CD8-positive, alpha-beta T cell (primary cell): ENCODE measurements at regions of chr1 and their contacts with region 1.

Region 1: GRCh38 chr1:19311959-19312781 is at the starts of genes AKR7A2 and SLC66A1:
- DNase-seq: peak; percentile 75 to 94 (median 88)
- ATAC-seq: peak; percentile 98
- H3K4me3 ChIP-seq: peak within 1 kb of the TSS; percentile 83 to 92
- H3K4me3 Mint-ChIP-seq: peak within 1 kb of the TSS; percentile 89
- H3K27ac ChIP-seq: peak within 1 kb of the TSS; percentile 54 to 64
- H3K27ac Mint-ChIP-seq: peak within 1 kb of the TSS; percentile 74
- H3K4me1 ChIP-seq: peaks cover 21% of the 10 kb centered on the region
- H3K4me1 Mint-ChIP-seq: peaks cover 42% of the 10 kb centered on the region
- H3K27me3 ChIP-seq: no peaks in the 10 kb centered on the region
- H3K27me3 Mint-ChIP-seq: no peaks in the 10 kb centered on the region
- CTCF ChIP-seq: no peak
- total RNA-seq, gene AKR7A2: 7.9 to 8.1 TPM
- total RNA-seq, gene SLC66A1: 1.3 to 2.1 TPM

Region 2: DNA sequence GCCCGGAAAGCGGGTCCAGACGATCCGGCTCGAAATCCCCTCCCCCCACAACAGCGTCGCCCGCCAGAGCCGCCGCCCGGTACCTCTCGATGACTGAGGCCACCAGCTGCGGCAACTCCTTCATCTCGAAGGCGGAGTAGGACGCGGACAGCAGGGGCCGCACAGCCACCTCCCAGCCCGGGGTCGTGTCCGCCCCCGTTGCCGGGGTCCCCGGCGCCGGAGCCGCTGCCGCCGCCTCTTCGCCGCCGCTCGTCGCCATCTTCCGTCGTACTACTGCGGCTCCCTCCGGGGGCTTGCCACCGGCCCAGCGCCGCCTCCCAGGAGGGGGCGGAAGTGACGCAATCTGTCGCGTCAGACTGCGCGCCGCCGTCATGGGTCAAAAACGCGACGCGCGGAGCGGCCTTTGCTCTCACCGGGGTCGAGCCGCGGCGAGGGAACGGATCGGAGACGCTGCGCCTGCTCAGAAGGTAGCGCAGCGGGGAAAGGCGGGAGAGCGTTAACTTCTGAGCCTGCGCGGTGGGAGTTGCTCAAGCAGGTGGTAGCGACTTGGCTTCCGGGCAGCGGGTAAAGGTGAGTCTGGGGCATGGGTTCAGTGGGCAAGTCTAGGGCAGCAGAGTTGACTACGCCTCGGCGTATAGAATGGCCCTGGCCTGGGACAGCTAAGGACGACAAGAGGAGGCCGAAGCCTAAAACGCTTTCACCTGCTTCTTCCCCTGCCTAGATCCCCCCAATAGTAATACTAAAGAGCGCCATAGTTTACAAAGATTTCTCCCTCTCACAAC is 102.0 kb before region 1 on chr1 and contains the start of gene UBR4:
- CTCF ChIA-PET with region 1: no interaction called
- POLR2A ChIA-PET with region 1: no interaction called
- intact Hi-C with region 1: loop called (anchors 1 to 10 kb)
- DNase-seq: peak; percentile 91 to 99 (median 97)
- ATAC-seq: peak; percentile 93
- H3K4me3 ChIP-seq: peak within 1 kb of the TSS; percentile 73 to 96
- H3K4me3 Mint-ChIP-seq: peak within 1 kb of the TSS; percentile 96
- H3K27ac ChIP-seq: peak within 1 kb of the TSS; percentile 86 to 96
- H3K27ac Mint-ChIP-seq: peak within 1 kb of the TSS; percentile 99
- H3K4me1 ChIP-seq: peaks cover 48% of the 10 kb centered on the region
- H3K4me1 Mint-ChIP-seq: peaks cover 76% of the 10 kb centered on the region
- H3K27me3 ChIP-seq: no peaks in the 10 kb centered on the region
- H3K27me3 Mint-ChIP-seq: no peaks in the 10 kb centered on the region
- CTCF ChIP-seq: no peak
- total RNA-seq, gene UBR4: 146 to 148 TPM

Region 3: GRCh38 chr1:19251305-19252196 is 60.6 kb before region 1 on chr1 and contains the starts of genes EMC1 and MRTO4:
- CTCF ChIA-PET with region 1: no interaction called
- POLR2A ChIA-PET with region 1: interaction called, 4 read pairs
- intact Hi-C with region 1: loop called in 1 of 2 experiments (anchors 1 kb)
- DNase-seq: peak; percentile 83 to 94 (median 87)
- ATAC-seq: peak; percentile 93
- H3K4me3 ChIP-seq: peak within 1 kb of the TSS; percentile 66 to 88
- H3K4me3 Mint-ChIP-seq: peak within 1 kb of the TSS; percentile 95
- H3K27ac ChIP-seq: peak within 1 kb of the TSS; percentile 83 to 98
- H3K27ac Mint-ChIP-seq: peak within 1 kb of the TSS; percentile 94
- H3K4me1 ChIP-seq: peaks cover 34% of the 10 kb centered on the region
- H3K4me1 Mint-ChIP-seq: peaks cover 38% of the 10 kb centered on the region
- H3K27me3 ChIP-seq: no peaks in the 10 kb centered on the region
- H3K27me3 Mint-ChIP-seq: no peaks in the 10 kb centered on the region
- CTCF ChIP-seq: no peak
- total RNA-seq, gene EMC1: 28.2 to 33.5 TPM
- total RNA-seq, gene MRTO4: 18.9 to 19.5 TPM

Region 4: DNA sequence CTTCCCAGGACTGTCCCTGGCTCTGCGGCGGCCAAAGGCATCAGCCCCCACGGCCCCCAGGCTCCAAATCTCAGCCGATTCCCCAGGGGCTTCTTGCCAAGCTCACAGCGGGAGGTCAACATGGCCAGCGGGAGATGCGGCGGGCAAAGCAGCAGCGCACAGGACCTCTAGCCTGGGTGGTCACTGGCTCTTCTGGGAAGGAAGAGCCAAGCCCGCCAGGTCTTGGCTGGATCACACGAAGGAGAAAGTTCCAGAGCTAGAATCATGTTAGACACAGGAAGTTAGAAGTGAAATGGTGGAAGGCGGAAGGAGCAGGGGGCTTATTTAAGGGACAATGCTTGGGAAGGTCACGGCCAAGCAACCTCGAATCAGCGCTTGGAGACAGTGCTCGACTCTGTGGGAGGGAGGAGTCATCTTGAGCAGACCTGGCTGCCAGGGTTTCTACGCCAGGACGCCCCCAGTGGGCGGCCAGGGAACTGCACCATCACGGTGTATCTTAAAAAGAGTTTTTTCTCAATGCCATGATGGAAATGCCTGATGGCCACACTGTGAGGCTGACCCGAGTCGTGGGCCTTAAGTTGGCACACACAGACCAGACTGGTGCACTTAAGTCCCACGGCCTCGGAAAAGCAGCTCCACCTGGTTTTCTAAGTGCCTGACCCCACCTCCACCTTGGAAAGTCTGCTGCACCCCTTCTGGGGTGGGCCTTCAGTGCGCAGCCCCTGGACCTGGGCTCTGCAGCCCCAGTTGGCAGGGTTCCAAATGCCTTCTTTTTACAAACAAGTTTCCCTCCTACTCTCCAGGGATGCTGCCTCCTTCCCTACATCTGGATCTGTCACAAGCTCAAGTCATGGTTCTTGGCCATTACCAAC is 29.3 kb after region 1 on chr1:
- CTCF ChIA-PET with region 1: interaction called, 3 read pairs
- POLR2A ChIA-PET with region 1: no interaction called
- intact Hi-C with region 1: loop called in 1 of 2 experiments (anchors 1 kb)
- DNase-seq: peak; percentile 55 to 79 (median 72)
- ATAC-seq: peak; percentile 94
- H3K4me3 ChIP-seq: no peak overlapping the region
- H3K4me3 Mint-ChIP-seq: no peak overlapping the region
- H3K27ac ChIP-seq: no peak overlapping the region
- H3K27ac Mint-ChIP-seq: no peak overlapping the region
- H3K4me1 ChIP-seq: no peaks in the 10 kb centered on the region
- H3K4me1 Mint-ChIP-seq: peaks cover 6% of the 10 kb centered on the region
- H3K27me3 ChIP-seq: no peaks in the 10 kb centered on the region
- H3K27me3 Mint-ChIP-seq: no peaks in the 10 kb centered on the region
- CTCF ChIP-seq: peak; percentile 88

Region 5: GRCh38 chr1:19390901-19391595 is 78.9 kb after region 1 on chr1:
- CTCF ChIA-PET with region 1: no interaction called
- POLR2A ChIA-PET with region 1: no interaction called
- intact Hi-C with region 1: loop called in 1 of 2 experiments (anchors 2 kb)
- DNase-seq: peak; percentile 46 to 87 (median 68)
- ATAC-seq: peak; percentile 70
- H3K4me3 ChIP-seq: peak overlapping the region; percentile 34 to 38
- H3K4me3 Mint-ChIP-seq: peak overlapping the region; percentile 85
- H3K27ac ChIP-seq: peak overlapping the region; percentile 50 to 66
- H3K27ac Mint-ChIP-seq: peak overlapping the region; percentile 90
- H3K4me1 ChIP-seq: peaks cover 54% of the 10 kb centered on the region
- H3K4me1 Mint-ChIP-seq: peaks cover 77% of the 10 kb centered on the region
- H3K27me3 ChIP-seq: no peaks in the 10 kb centered on the region
- H3K27me3 Mint-ChIP-seq: no peaks in the 10 kb centered on the region
- CTCF ChIP-seq: peak; percentile 88

Region 6: DNA sequence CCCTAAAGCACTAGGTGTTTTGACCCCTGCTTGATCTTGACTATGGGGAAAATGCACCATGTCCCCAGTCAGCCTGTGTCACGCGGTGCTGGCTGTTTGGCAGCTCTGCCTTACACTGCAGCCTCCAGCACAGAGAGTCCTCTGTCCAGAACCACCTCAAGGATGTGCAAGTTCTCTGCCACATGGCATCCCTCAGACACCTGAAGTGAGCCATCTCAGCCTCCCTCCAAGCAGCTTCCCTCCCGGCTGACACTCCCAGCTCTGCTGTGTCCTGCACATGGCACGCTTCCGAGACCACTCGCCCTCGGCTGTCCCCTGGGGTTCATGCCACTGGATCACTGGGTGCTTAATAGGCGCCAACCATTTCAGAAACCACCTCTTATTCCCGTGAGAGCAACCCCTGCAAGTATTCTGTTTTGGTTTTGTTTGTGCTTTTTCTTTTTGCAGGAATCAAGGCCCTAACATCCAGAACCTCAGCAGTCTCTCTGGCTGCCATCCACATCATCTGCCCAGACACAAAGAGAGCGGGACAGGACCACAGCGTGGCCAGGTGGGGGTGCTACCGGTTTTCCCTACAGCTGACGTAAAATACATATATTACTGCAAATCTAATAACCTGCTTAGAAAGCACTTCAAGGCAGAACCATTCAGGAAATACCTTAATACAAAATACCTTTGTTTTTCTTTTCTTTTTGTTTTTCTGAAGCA is 127.4 kb after region 1 on chr1:
- CTCF ChIA-PET with region 1: no interaction called
- POLR2A ChIA-PET with region 1: no interaction called
- intact Hi-C with region 1: no loop called
- DNase-seq: peak; percentile 14 to 69 (median 58)
- ATAC-seq: peak; percentile 82
- H3K4me3 ChIP-seq: no peak overlapping the region
- H3K4me3 Mint-ChIP-seq: peak overlapping the region; percentile 22
- H3K27ac ChIP-seq: peak overlapping the region in 1 of 2 experiments; percentile 37
- H3K27ac Mint-ChIP-seq: peak overlapping the region; percentile 85
- H3K4me1 ChIP-seq: peaks cover 80% of the 10 kb centered on the region
- H3K4me1 Mint-ChIP-seq: peaks cover 90% of the 10 kb centered on the region
- H3K27me3 ChIP-seq: no peaks in the 10 kb centered on the region
- H3K27me3 Mint-ChIP-seq: no peaks in the 10 kb centered on the region
- CTCF ChIP-seq: peak; percentile 47

Region 7: GRCh38 chr1:19643602-19644394 is 331.6 kb after region 1 on chr1 and contains the start of gene NBL1:
- CTCF ChIA-PET with region 1: no interaction called
- POLR2A ChIA-PET with region 1: no interaction called
- intact Hi-C with region 1: loop called in 1 of 2 experiments (anchors 1 kb)
- DNase-seq: peak; percentile 58 to 89 (median 77)
- ATAC-seq: peak; percentile 89
- H3K4me3 ChIP-seq: peak within 1 kb of the TSS; percentile 55 to 78
- H3K4me3 Mint-ChIP-seq: peak within 1 kb of the TSS; percentile 98
- H3K27ac ChIP-seq: peak within 1 kb of the TSS in 1 of 2 experiments; percentile 45
- H3K27ac Mint-ChIP-seq: peak within 1 kb of the TSS; percentile 95
- H3K4me1 ChIP-seq: peaks cover 32% of the 10 kb centered on the region
- H3K4me1 Mint-ChIP-seq: peaks cover 33% of the 10 kb centered on the region
- H3K27me3 ChIP-seq: peaks cover 0 to 2% of the 10 kb centered on the region in 2 experiments
- H3K27me3 Mint-ChIP-seq: peaks cover 16% of the 10 kb centered on the region
- CTCF ChIP-seq: no peak
- total RNA-seq, gene NBL1: 76.5 to 80.5 TPM